ENCODE measurements at regions of chr5 and their contacts with region 1.

Region 1: DNA sequence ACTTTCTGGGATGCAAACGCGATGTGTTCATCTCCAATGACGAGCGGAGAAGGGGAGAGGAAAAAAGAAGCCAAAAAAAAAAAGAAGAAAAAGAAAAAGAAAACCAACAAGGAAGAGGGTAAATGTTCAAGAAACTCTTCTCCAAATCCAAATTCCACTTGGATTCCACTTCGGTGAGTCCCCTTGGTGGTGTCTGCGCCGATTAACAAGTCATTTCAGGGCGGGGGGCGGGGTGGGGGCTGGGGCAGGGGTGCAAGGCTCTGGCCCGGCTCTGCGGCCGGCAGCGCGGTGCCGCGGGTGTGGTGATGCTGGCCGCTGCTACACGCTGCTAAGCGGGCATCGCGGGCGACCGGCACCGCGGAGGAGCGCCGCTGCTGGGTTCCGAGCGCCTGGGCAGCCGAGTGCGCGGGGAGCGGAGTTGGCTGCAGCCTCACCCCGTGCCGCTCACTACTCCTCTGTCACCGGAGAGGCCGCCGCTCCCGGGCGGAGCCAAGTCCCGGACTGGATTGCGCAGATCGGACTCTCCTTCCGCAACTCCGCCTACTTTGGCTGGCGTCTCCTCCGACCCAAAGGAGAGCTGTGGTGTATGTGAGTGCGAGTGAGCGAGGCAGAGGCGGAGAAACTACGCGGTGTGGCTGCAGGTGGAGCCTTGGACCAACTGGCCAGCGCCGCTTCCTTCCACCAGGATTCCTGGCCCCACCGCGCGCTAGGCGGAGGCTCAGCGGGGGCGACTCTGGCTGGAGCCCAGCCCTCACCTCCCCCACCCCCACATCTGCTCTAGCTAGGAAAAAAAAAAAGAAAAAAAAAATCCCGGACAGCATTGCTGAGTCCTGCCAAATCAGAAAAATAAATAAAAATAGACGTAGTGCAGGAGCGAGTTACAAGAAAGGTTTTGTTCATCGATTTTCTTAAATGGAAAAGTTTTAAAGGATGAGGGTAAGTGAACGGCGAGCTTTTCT is at the start of gene SEMA6A:
- DNase-seq: peak; percentile 75
- ATAC-seq: peak; percentile 90
- H3K4me3 ChIP-seq: peak within 1 kb of the TSS; percentile 69
- H3K27ac ChIP-seq: no peak within 1 kb of the TSS
- H3K4me1 ChIP-seq: no peaks in the 10 kb centered on the region; the same call in 1 of the 2 replicates
- H3K27me3 ChIP-seq: peaks cover 47% of the 10 kb centered on the region
- CTCF ChIP-seq: no peak
- POLR2A ChIP-seq: no peak
- RAD21 ChIP-seq: no peak
- total RNA-seq, gene SEMA6A: 0.28 and 0.36 TPM in 2 replicates

Region 2: GRCh38 chr5:116273448-116274207 is 301.0 kb before region 1 on chr5:
- CTCF ChIA-PET with region 1: no interaction called
- POLR2A ChIA-PET with region 1: no interaction called
- dilution Hi-C with region 1: no loop called
- in situ Hi-C with region 1: no loop called
- intact Hi-C with region 1: loop called (anchors 5 kb)
- DNase-seq: peak; percentile 78
- ATAC-seq: peak; percentile 90
- H3K4me3 ChIP-seq: no peak overlapping the region
- H3K27ac ChIP-seq: peak overlapping the region; percentile 10; the same call in 1 of the 2 replicates
- H3K4me1 ChIP-seq: peaks cover 2% of the 10 kb centered on the region
- H3K27me3 ChIP-seq: no peaks in the 10 kb centered on the region
- CTCF ChIP-seq: no peak
- POLR2A ChIP-seq: no peak
- RAD21 ChIP-seq: no peak

Region 3: GRCh38 chr5:116585227-116585626 is 10.6 kb after region 1 on chr5:
- CTCF ChIA-PET with region 1: no interaction called
- POLR2A ChIA-PET with region 1: no interaction called
- dilution Hi-C with region 1: no loop called
- in situ Hi-C with region 1: no loop called
- intact Hi-C with region 1: no loop called
- DNase-seq: no peak
- ATAC-seq: no peak
- H3K4me3 ChIP-seq: no peak overlapping the region
- H3K27ac ChIP-seq: no peak overlapping the region
- H3K4me1 ChIP-seq: no peaks in the 10 kb centered on the region
- H3K27me3 ChIP-seq: no peaks in the 10 kb centered on the region
- CTCF ChIP-seq: no peak
- POLR2A ChIP-seq: no peak
- RAD21 ChIP-seq: no peak

Region 4: GRCh38 chr5:117519957-117520500 is 945.4 kb after region 1 on chr5:
- CTCF ChIA-PET with region 1: no interaction called
- POLR2A ChIA-PET with region 1: no interaction called
- dilution Hi-C with region 1: no loop called
- in situ Hi-C with region 1: no loop called
- intact Hi-C with region 1: loop called (anchors 10 kb)
- DNase-seq: no peak
- ATAC-seq: no peak
- H3K4me3 ChIP-seq: no peak overlapping the region
- H3K27ac ChIP-seq: no peak overlapping the region
- H3K4me1 ChIP-seq: no peaks in the 10 kb centered on the region
- H3K27me3 ChIP-seq: no peaks in the 10 kb centered on the region
- CTCF ChIP-seq: no peak
- POLR2A ChIP-seq: no peak
- RAD21 ChIP-seq: no peak